Endothelial cell of umbilical vein (primary cell): ENCODE measurements at regions of chr17 and their contacts with region 1.

Region 1: GRCh38 chr17:76014184-76014924 is 12.8 kb downstream of the EVPL start:
- DNase-seq: peak; percentile 59
- H3K4me3 ChIP-seq: no peak overlapping the region
- H3K27ac ChIP-seq: no peak overlapping the region
- H3K4me1 ChIP-seq: no peaks in the 10 kb centered on the region
- H3K27me3 ChIP-seq: no peaks in the 10 kb centered on the region
- CTCF ChIP-seq: peak; percentile 89 to 99
- POLR2A ChIP-seq: no peak

Region 2: GRCh38 chr17:76027159-76027839 is 12.9 kb after region 1 on chr17 and contains the start of gene EVPL:
- CTCF ChIA-PET with region 1: interaction called, 31 read pairs
- POLR2A ChIA-PET with region 1: no interaction called
- dilution Hi-C with region 1: no loop called
- intact Hi-C with region 1: no loop called
- DNase-seq: no peak
- H3K4me3 ChIP-seq: no peak within 1 kb of the TSS
- H3K27ac ChIP-seq: no peak within 1 kb of the TSS
- H3K4me1 ChIP-seq: peaks cover 9% of the 10 kb centered on the region
- H3K27me3 ChIP-seq: no peaks in the 10 kb centered on the region
- CTCF ChIP-seq: no peak
- POLR2A ChIP-seq: no peak
- total RNA-seq, gene EVPL: not detected in 2 replicates

Region 3: GRCh38 chr17:76053246-76054116 is 39.1 kb after region 1 on chr17:
- CTCF ChIA-PET with region 1: interaction called, 14 read pairs
- POLR2A ChIA-PET with region 1: no interaction called
- dilution Hi-C with region 1: no loop called
- intact Hi-C with region 1: no loop called
- DNase-seq: peak; percentile 79
- H3K4me3 ChIP-seq: peak overlapping the region in 1 of 3 experiments; percentile 23
- H3K27ac ChIP-seq: peak overlapping the region; percentile 25
- H3K4me1 ChIP-seq: peaks cover 18% of the 10 kb centered on the region
- H3K27me3 ChIP-seq: no peaks in the 10 kb centered on the region
- CTCF ChIP-seq: no peak
- POLR2A ChIP-seq: no peak

Region 4: GRCh38 chr17:76103274-76104139 is 89.2 kb after region 1 on chr17 and contains the start of gene EXOC7:
- CTCF ChIA-PET with region 1: interaction called, 28 read pairs
- POLR2A ChIA-PET with region 1: no interaction called
- dilution Hi-C with region 1: no loop called
- intact Hi-C with region 1: loop called (anchors 5 kb)
- DNase-seq: peak; percentile 91
- H3K4me3 ChIP-seq: peak within 1 kb of the TSS; percentile 73 to 87 (median 78)
- H3K27ac ChIP-seq: peak within 1 kb of the TSS; percentile 52
- H3K4me1 ChIP-seq: peaks cover 8% of the 10 kb centered on the region
- H3K27me3 ChIP-seq: no peaks in the 10 kb centered on the region
- CTCF ChIP-seq: peak in 1 of 2 donors; percentile 17
- POLR2A ChIP-seq: peak; percentile 88
- total RNA-seq, gene EXOC7: 122 and 137 TPM in 2 replicates

Region 5: DNA sequence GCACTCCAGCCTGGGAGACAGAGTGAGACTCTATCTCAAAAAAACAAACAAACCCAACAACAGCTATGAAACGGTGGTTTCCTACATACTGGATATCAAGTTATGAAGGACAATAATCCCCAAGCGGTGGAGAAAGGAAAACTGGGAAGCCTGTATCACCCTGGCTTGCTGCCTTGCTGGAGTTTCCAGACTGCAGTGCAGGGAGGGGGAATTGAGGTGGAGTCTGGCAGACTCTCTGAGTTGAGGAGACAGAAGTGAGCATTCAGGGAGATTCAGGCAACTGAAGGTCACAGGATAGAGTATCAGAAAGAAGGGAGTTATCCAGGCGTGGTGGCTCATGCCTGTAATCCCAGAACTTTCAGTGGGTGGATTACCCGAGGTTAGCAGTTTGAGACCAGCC is 281.8 kb after region 1 on chr17:
- CTCF ChIA-PET with region 1: interaction called, 11 read pairs
- POLR2A ChIA-PET with region 1: no interaction called
- dilution Hi-C with region 1: no loop called
- intact Hi-C with region 1: no loop called
- DNase-seq: no peak
- H3K4me3 ChIP-seq: no peak overlapping the region
- H3K27ac ChIP-seq: no peak overlapping the region
- H3K4me1 ChIP-seq: peaks cover 4% of the 10 kb centered on the region
- H3K27me3 ChIP-seq: no peaks in the 10 kb centered on the region
- CTCF ChIP-seq: no peak
- POLR2A ChIP-seq: no peak

Region 6: GRCh38 chr17:76540381-76541300 is 526.3 kb after region 1 on chr17:
- CTCF ChIA-PET with region 1: no interaction called
- POLR2A ChIA-PET with region 1: no interaction called
- dilution Hi-C with region 1: no loop called
- intact Hi-C with region 1: no loop called
- DNase-seq: peak; percentile 95
- H3K4me3 ChIP-seq: peak overlapping the region in 1 of 3 experiments; percentile 35
- H3K27ac ChIP-seq: no peak overlapping the region
- H3K4me1 ChIP-seq: peaks cover 4% of the 10 kb centered on the region
- H3K27me3 ChIP-seq: peaks cover 17 to 19% of the 10 kb centered on the region in 2 experiments
- CTCF ChIP-seq: peak in 1 of 2 donors; percentile 27
- POLR2A ChIP-seq: peak; percentile 53